ENCODE measurements at regions of chr2 and their contacts with region 1.

Region 1: DNA sequence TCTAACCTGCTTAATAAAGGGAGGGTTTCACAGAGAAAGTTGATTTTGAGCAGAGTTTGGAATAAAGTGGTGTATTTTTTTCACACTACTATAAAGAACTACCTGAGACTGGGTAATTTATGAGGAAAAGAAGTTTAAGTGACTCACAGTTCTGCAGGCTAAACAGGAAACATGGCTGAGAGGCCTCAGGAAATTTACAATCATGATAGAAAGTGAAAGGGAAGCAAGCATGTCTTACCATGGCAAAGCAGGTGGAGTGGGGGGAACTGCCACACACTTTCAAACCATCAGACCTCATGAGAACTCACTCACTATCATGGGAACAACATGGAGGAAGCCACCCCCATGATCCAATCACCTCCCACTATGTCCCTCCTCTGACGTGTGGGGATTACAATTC is 546.7 kb downstream of the EPHA4 start:
- DNase-seq: no peak
- ATAC-seq: peak; percentile 78
- H3K4me3 Mint-ChIP-seq: peak overlapping the region; percentile 25
- H3K27ac Mint-ChIP-seq: peak overlapping the region; percentile 75
- H3K4me1 Mint-ChIP-seq: peaks cover 20% of the 10 kb centered on the region
- H3K27me3 Mint-ChIP-seq: peaks cover 1% of the 10 kb centered on the region
- CTCF ChIP-seq: no peak

Region 2: DNA sequence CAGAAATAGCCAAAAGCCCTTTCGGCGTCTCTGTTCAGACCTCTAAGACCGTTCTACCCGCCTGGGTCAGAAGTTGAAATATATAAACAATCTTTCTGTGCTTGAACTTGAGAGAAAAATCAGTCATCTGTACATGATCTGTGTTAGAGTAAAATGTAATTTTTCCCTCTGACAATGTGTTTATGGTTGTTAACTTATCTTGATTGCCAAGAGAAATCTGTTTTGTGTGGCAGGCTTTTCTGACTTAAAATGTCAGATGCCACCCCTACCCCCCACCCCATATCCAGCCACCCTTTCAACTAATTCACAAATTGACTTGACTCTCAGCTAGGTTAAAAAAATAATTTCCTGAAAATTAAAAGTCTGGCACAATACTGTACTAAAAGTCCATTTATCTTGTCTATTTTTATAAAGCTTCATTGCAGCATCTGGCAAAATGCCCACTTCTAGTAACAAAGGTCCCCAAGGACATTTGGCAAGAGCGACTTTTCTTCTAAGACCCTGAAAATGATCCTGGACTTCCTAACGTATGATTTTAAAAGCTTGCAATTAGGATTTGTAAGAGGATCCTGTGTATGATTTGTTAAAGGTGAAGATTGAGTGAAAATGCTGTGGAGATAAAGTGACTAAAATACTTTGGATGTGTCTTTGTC is 242.5 kb after region 1 on chr2:
- CTCF ChIA-PET with region 1: no interaction called
- POLR2A ChIA-PET with region 1: interaction called, 11 read pairs
- intact Hi-C with region 1: no loop called
- DNase-seq: no peak
- ATAC-seq: no peak
- H3K4me3 Mint-ChIP-seq: no peak overlapping the region
- H3K27ac Mint-ChIP-seq: no peak overlapping the region
- H3K4me1 Mint-ChIP-seq: no peaks in the 10 kb centered on the region
- H3K27me3 Mint-ChIP-seq: peaks cover 7% of the 10 kb centered on the region
- CTCF ChIP-seq: no peak